ENCODE measurements at regions of chr5 and their contacts with region 1.

Region 1: GRCh38 chr5:7391814-7392692 is 3.9 kb upstream of the ADCY2 start:
- DNase-seq: no peak
- ATAC-seq: peak in 3 of 4 donors; percentile 29 to 48 (median 29)
- H3K4me3 ChIP-seq: no peak overlapping the region
- H3K27ac ChIP-seq: peak overlapping the region; percentile 84
- H3K4me1 ChIP-seq: no peaks in the 10 kb centered on the region
- H3K27me3 ChIP-seq: no peaks in the 10 kb centered on the region
- CTCF ChIP-seq: peak; percentile 67

Region 2: GRCh38 chr5:6820851-6821479 is 571.1 kb before region 1 on chr5:
- intact Hi-C with region 1: loop called in 1 of 2 experiments (anchors 5 kb)
- DNase-seq: no peak
- ATAC-seq: peak; percentile 47 to 75 (median 66)
- H3K4me3 ChIP-seq: no peak overlapping the region
- H3K27ac ChIP-seq: no peak overlapping the region
- H3K4me1 ChIP-seq: peaks cover 3% of the 10 kb centered on the region
- H3K27me3 ChIP-seq: peaks cover 0 to 5% (median 0%) of the 10 kb centered on the region in 3 donors
- CTCF ChIP-seq: peak; percentile 61

Region 3: GRCh38 chr5:7436506-7436905 is 44.5 kb after region 1 on chr5:
- intact Hi-C with region 1: loop called in 1 of 2 experiments (anchors 5 kb)
- DNase-seq: peak; percentile 66 to 87
- ATAC-seq: peak; percentile 89 to 92 (median 90)
- H3K4me3 ChIP-seq: peak overlapping the region; percentile 12
- H3K27ac ChIP-seq: peak overlapping the region; percentile 92
- H3K4me1 ChIP-seq: peaks cover 47% of the 10 kb centered on the region
- H3K27me3 ChIP-seq: no peaks in the 10 kb centered on the region
- CTCF ChIP-seq: no peak

Region 4: DNA sequence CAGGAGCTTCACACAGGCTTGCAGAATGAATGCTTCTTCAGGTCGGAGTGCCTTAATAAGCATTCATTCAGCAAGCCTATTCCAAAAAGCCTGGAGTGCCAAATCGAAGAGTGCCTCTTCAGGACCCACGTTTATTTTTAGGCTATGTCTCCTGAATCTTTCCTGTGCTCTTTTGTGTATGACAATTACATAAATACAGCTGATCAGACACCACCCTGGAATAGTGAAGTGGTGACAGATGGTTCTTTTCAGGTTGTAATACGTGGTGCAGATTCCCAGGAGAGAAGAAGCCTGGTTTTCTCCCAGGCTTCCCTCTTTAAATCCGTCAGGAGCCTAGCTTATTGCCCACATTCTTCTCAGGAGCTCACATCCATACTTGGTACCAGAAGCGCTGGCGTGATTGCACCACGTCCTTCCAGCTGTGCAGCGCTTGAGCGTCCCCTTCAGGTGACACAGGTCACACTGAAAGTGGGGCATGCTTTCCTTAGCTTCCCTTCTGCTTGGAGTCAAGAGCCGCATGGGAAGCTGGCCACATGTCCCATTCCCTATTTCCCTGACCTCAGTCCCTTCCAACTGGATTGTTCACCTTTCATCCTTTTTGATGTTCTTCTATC is 127.0 kb after region 1 on chr5:
- intact Hi-C with region 1: loop called (anchors 2 to 5 kb)
- DNase-seq: peak; percentile 55 to 81
- ATAC-seq: peak; percentile 86 to 96 (median 94)
- H3K4me3 ChIP-seq: no peak overlapping the region
- H3K27ac ChIP-seq: peak overlapping the region; percentile 51
- H3K4me1 ChIP-seq: peaks cover 12% of the 10 kb centered on the region
- H3K27me3 ChIP-seq: no peaks in the 10 kb centered on the region
- CTCF ChIP-seq: peak; percentile 69

Region 5: GRCh38 chr5:7754992-7755596 is 363.0 kb after region 1 on chr5:
- intact Hi-C with region 1: loop called in 1 of 2 experiments (anchors 5 kb)
- DNase-seq: peak; percentile 55 to 81
- ATAC-seq: peak; percentile 60 to 86 (median 72)
- H3K4me3 ChIP-seq: no peak overlapping the region
- H3K27ac ChIP-seq: peak overlapping the region; percentile 76
- H3K4me1 ChIP-seq: peaks cover 42% of the 10 kb centered on the region
- H3K27me3 ChIP-seq: no peaks in the 10 kb centered on the region
- CTCF ChIP-seq: peak; percentile 58